ENCODE measurements at regions of chr7 and their contacts with region 1.

Region 1: GRCh38 chr7:106153891-106154449 is 41.9 kb upstream of the SYPL1 start:
- DNase-seq: peak; percentile 87
- H3K27ac ChIP-seq: peak overlapping the region; percentile 3
- CTCF ChIP-seq: peak; percentile 99

Region 2: GRCh38 chr7:106050011-106050745 is 103.8 kb before region 1 on chr7:
- CTCF ChIA-PET with region 1: interaction called, 22 read pairs
- POLR2A ChIA-PET with region 1: no interaction called
- DNase-seq: peak; percentile 61
- H3K27ac ChIP-seq: peak overlapping the region; percentile 83
- CTCF ChIP-seq: peak; percentile 69

Region 3: GRCh38 chr7:106056513-106057203 is 97.3 kb before region 1 on chr7:
- CTCF ChIA-PET with region 1: interaction called, 37 read pairs
- POLR2A ChIA-PET with region 1: no interaction called
- DNase-seq: peak; percentile 72
- H3K27ac ChIP-seq: peak overlapping the region; percentile 95
- CTCF ChIP-seq: peak; percentile 88

Region 4: DNA sequence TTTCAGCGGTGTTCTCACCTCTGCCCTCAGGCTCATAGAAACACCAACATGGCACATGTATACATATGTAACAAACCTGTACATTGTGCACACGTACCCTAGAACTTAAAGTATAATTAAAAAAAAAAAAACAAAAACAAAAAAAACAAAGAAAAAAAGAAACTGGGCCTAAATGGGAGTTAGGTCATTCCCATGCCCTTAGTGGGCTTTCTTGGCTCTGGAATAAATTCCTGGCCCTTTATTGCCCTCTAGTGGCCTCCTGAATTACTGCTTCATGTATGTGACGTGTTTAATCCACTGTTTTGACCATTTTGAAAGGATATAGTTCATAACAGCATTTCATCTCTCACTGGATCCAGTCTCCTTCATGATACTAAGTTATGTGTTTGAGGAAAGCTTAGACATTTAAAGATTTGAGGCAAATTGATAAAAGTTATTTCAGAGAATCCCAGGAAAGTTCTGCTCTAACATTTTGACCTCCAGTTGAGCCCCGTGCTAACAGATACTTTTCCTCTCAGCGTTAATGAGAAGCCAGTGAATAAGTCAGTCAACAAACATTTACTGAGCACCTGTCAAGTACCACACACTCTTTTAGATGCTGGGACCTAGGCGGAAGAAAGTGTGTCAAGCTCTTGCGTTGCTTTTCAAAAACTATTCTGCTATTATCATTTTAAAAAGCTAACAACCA is 12.8 kb after region 1 on chr7:
- CTCF ChIA-PET with region 1: interaction called, 11 read pairs
- POLR2A ChIA-PET with region 1: no interaction called
- DNase-seq: peak; percentile 70
- H3K27ac ChIP-seq: no peak overlapping the region
- CTCF ChIP-seq: peak; percentile 94